MCF 10A (cell line): ENCODE measurements at regions of chr11 and their contacts with region 1.

Region 1: DNA sequence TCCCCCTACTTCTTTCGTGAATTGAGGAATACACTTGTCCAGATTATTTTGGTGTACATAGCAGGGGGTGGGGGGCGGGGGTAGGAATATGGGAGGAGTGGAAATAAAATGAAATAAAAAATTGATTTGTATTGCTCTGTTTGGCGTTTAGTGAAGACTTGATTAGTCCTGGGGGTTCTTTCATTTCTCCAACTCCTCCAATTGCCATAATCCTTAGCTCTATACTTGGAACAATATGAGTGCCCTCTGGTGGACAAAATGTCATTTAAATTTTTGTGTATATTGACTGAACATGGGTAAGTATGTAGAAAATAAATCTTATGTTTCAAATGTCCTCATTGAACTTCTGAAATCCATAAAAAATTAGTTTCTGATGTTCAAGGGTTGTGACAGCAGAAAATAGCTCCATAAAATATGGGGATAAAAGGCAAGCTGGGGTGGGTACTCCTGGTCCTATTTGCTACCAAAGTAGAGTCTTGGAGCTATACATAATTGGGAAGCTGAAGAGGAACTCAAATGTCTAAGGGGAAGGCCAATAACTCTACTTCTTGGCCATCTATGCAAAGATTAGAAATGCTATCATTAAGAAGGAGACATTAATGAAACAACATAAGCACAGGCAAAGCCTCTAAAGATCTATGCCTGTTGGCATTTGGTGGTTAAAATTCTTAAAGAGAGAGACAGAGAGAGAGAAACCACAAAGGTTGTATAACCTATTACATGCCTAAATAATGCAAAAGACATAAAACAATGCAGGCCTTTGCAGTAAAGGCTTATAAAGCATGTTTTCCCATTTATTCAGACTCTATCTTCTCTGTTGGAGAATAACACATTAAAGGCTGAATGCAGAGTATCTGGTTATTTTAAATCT is 421.6 kb downstream of the METTL15 start:
- DNase-seq: peak; percentile 59
- H3K4me3 Mint-ChIP-seq: no peak overlapping the region
- H3K27ac Mint-ChIP-seq: no peak overlapping the region
- H3K4me1 Mint-ChIP-seq: peaks cover 5% of the 10 kb centered on the region
- H3K27me3 Mint-ChIP-seq: no peaks in the 10 kb centered on the region
- CTCF ChIP-seq: peak; percentile 38

Region 2: DNA sequence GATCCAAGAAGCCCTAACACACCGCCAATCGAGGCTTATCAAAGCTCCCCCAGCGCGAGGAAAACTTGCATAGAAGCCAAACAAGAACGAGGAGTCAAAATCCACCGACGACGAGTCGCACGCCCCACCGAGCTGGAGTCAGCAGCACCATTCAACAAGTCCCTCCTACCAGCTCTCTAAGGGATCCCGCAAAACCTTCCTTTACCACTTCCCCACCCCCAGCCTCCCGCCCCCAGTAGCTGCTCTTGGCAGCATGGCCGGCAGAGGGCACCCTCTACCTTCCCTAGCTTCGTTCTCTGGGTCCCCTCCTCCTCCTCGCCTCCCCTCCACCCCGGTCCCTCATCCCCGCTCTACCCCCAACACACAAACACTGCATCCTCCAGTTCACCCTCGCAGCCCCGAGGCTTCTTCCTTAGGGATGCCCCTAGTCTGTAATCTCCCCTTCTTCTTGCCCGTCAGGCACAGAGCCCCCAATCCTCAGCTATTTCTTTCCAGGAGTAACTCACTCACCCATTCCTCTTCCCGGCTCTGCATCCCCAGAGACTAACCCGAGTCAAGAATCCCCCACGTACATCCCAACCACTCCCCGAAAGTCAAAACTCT is 830.8 kb before region 1 on chr11:
- CTCF ChIA-PET with region 1: interaction called, 139 read pairs
- POLR2A ChIA-PET with region 1: interaction called, 5 read pairs
- intact Hi-C with region 1: loop called (anchors 2 kb)
- DNase-seq: peak; percentile 89
- H3K4me3 Mint-ChIP-seq: peak overlapping the region; percentile 97
- H3K27ac Mint-ChIP-seq: no peak overlapping the region
- H3K4me1 Mint-ChIP-seq: peaks cover 11% of the 10 kb centered on the region
- H3K27me3 Mint-ChIP-seq: no peaks in the 10 kb centered on the region
- CTCF ChIP-seq: peak; percentile 84

Region 3: GRCh38 chr11:27720277-27720830 is 809.4 kb before region 1 on chr11:
- CTCF ChIA-PET with region 1: interaction called, 25 read pairs
- POLR2A ChIA-PET with region 1: no interaction called
- intact Hi-C with region 1: loop called (anchors 5 kb)
- DNase-seq: peak; percentile 53
- H3K4me3 Mint-ChIP-seq: peak overlapping the region; percentile 81
- H3K27ac Mint-ChIP-seq: no peak overlapping the region
- H3K4me1 Mint-ChIP-seq: peaks cover 14% of the 10 kb centered on the region
- H3K27me3 Mint-ChIP-seq: peaks cover 28% of the 10 kb centered on the region
- CTCF ChIP-seq: no peak

Region 4: GRCh38 chr11:27847496-27847895 is 682.3 kb before region 1 on chr11:
- CTCF ChIA-PET with region 1: no interaction called
- POLR2A ChIA-PET with region 1: no interaction called
- intact Hi-C with region 1: loop called (anchors 10 kb)
- DNase-seq: no peak
- H3K4me3 Mint-ChIP-seq: no peak overlapping the region
- H3K27ac Mint-ChIP-seq: no peak overlapping the region
- H3K4me1 Mint-ChIP-seq: no peaks in the 10 kb centered on the region
- H3K27me3 Mint-ChIP-seq: no peaks in the 10 kb centered on the region
- CTCF ChIP-seq: no peak

Region 5: DNA sequence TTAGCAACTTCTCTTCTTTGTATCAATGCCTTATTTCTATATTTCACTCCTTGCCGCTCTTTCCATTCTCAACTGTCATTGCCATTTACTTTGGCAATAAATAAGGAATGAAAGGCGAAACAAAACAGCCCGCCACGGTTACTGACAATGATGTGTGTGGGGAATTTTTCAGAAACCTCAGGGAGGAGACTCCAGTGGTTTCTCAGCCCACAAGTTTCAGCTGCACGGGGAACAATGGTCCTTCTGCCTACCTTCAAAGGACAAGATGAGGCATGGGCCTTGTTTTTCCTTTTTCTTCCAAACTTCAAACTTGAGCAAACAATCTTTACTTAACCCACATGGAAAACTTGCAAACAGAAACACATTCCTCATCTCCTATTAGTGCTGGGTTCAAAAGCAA is 12.2 kb before region 1 on chr11:
- CTCF ChIA-PET with region 1: interaction called, 23 read pairs
- POLR2A ChIA-PET with region 1: no interaction called
- intact Hi-C with region 1: no loop called
- DNase-seq: no peak
- H3K4me3 Mint-ChIP-seq: no peak overlapping the region
- H3K27ac Mint-ChIP-seq: no peak overlapping the region
- H3K4me1 Mint-ChIP-seq: peaks cover 18% of the 10 kb centered on the region
- H3K27me3 Mint-ChIP-seq: no peaks in the 10 kb centered on the region
- CTCF ChIP-seq: no peak

Region 6: DNA sequence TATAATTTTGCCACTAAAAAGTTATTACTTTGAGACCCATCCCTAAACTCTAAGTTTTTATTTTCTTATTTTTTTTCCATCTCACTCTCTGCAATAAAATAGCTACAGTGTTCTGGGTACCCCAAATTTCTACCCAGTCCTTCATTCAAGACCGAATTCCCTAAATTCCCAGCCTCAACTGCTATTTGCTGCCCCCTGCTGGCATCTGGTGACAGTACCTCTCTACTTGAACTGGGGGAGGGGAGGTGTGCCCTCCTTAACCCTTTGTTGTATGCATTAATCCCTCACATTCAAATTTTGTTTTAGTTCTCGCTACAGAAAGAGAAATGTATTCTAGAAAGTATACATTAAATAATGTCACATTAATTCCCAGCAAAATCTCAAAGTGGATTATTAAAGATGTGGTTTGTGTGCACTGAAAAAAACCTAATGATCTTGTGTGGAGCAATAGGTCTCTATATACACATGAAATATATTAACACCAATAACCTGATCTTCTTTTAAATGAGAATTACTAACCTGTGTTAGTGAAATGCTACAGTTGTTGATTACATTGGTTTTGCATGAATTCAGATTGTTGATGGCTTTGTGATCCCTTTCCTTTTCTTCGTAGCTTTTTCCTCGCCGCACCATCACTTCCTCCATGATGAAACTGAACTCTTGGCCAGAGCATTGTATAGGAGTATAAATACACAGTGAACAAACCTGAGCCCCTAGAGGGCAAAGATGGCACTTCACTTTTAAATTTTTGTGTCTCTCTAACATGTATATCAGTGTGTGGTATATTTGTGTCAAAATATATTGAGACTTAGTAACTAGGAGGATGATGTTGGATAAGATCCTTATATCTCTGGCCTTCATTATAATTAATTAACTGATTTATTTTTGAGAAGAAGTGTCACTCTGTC is 168.4 kb after region 1 on chr11:
- CTCF ChIA-PET with region 1: interaction called, 3 read pairs
- POLR2A ChIA-PET with region 1: interaction called, 3 read pairs
- intact Hi-C with region 1: loop called (anchors 10 kb)
- DNase-seq: peak; percentile 79
- H3K4me3 Mint-ChIP-seq: no peak overlapping the region
- H3K27ac Mint-ChIP-seq: peak overlapping the region; percentile 36
- H3K4me1 Mint-ChIP-seq: peaks cover 41% of the 10 kb centered on the region
- H3K27me3 Mint-ChIP-seq: no peaks in the 10 kb centered on the region
- CTCF ChIP-seq: peak; percentile 76

Region 7: DNA sequence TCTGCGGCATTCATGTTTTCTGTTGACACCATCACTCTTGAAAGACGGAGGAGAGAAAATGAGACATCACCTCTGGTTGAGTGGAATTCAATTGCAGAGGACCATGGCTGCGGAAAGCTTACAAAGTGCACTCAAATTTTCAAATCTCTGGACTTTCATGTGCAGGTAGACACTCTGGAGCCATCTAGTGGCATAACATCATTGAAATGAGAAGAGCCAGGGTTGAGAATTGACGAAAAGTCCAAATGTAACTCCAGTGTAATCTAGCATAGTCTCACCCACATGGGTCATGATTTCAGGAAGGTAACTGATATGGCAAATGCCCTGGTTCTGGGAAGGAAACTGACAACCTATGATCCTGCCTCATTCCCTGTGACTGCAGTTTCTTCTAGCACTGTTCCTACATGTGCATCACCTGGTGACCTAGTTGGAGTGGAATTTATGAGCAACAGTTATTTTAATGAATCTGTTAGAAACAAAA is 799.2 kb after region 1 on chr11:
- CTCF ChIA-PET with region 1: interaction called, 19 read pairs
- POLR2A ChIA-PET with region 1: no interaction called
- intact Hi-C with region 1: loop called (anchors 10 kb)
- DNase-seq: peak; percentile 65
- H3K4me3 Mint-ChIP-seq: no peak overlapping the region
- H3K27ac Mint-ChIP-seq: peak overlapping the region; percentile 23
- H3K4me1 Mint-ChIP-seq: peaks cover 8% of the 10 kb centered on the region
- H3K27me3 Mint-ChIP-seq: no peaks in the 10 kb centered on the region
- CTCF ChIP-seq: peak; percentile 76